ENCODE measurements at regions of chr1 and their contacts with region 1.

Region 1: DNA sequence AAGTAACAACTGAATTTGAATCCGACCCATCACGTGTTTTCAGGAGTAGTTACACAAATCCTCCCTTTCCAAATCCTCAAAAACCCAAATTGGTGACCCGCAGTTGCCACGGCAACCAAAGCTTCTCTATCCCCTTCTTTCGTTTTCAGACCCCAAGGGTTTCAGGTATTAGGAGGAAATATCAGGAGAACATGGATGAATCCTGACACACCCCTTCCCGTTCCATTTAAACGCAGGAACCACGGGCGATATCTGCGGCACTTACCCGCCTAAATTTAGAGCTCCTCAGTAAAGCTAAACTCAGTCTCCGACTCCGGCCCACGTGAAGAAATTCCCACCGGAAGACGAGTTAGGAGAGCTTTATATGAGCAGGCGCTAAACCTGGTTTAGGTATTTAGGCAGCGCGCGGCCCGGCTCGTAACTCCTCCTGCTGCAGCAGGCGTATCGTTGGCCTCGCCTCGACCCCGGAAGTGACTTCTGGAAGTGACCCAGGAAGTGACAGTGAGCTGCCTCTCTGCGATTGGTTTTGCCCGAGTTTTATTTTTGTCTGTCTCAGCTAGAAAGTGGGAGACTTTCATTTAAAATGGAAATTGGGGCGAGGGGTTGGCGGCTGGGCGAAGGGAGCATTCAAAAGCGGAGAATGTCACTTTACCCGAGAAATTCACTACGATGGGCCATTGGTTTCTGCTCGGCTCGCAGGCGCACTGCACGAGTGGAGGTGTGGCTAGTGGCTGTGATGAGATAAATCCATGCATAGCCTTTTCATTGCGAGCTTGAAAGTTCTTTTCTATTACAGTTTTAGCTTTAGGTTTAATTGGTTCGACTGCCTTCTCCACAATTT is at the start of gene TAF1A:
- DNase-seq: peak; percentile 92
- H3K4me3 Mint-ChIP-seq: peak within 1 kb of the TSS; percentile 97
- H3K27ac Mint-ChIP-seq: peak within 1 kb of the TSS; percentile 96
- H3K4me1 Mint-ChIP-seq: peaks cover 45% of the 10 kb centered on the region
- H3K27me3 Mint-ChIP-seq: no peaks in the 10 kb centered on the region
- total RNA-seq, gene TAF1A: 19.1 to 19.6 TPM

Region 2: DNA sequence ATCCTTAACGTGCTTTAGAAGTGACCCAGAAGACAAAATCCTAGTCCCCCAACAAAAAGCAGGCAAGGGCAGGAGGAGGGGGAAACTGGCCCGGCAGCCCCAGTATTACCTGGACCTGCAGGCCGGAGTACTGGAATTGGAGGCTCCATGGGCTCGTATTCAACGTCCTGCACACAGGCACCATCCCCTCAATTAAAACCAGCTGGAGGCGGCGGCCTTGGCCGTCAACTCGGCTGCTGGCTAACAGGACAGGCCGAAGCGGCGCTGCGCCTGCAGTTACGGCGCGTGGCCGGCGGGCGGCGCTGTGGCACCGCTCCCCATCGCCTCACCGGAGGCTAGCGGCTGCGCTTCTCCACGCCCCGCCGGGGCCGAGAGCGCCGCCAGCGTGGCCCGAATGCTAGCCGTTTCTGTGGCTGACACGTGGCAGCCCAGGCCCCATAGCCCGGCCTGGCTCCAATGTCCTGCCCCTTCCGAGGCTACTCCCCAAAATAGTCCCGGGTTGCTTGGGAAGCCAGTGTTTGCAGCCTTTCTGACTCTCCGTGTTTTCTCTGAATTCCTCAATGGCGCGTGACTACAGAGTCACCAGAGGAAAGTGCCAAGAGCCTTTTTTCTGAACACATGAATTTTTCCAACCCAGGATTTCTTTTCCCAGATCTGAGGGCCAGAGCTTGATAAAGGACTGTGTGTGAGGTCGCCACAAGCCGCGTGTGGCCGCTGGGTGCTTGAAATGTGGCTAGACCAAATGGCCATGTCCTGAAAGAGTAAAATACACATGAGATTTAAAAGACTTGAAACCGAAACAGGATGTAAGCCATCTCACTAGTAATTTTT is 124.3 kb before region 1 on chr1:
- CTCF ChIA-PET with region 1: interaction called, 5 read pairs
- POLR2A ChIA-PET with region 1: no interaction called
- intact Hi-C with region 1: loop called (anchors 2 kb)
- DNase-seq: peak; percentile 87
- H3K4me3 Mint-ChIP-seq: peak overlapping the region; percentile 79
- H3K27ac Mint-ChIP-seq: peak overlapping the region; percentile 72
- H3K4me1 Mint-ChIP-seq: peaks cover 10% of the 10 kb centered on the region
- H3K27me3 Mint-ChIP-seq: no peaks in the 10 kb centered on the region

Region 3: DNA sequence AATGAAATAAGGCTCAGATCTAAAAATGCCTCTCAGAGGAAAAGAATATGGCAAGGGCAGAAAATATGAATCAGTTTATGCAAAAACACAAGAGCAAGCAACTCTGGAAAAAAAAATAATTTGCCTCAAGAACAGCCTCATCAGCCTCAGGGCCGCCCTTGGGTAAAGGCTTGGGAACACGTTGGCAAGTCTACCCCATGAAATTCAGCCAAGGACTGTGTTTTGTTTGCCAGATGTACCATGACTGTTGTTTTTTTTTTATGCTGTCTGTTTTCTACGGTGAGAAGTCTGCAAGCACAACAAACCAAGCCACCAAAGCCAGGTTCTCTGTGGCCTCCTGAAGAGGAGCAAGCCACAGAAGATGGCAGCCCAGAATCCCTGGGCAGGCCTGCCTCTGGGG is 59.8 kb before region 1 on chr1:
- CTCF ChIA-PET with region 1: no interaction called
- POLR2A ChIA-PET with region 1: no interaction called
- intact Hi-C with region 1: no loop called
- DNase-seq: no peak
- H3K4me3 Mint-ChIP-seq: no peak overlapping the region
- H3K27ac Mint-ChIP-seq: no peak overlapping the region
- H3K4me1 Mint-ChIP-seq: no peaks in the 10 kb centered on the region
- H3K27me3 Mint-ChIP-seq: peaks cover 4% of the 10 kb centered on the region

Region 4: GRCh38 chr1:222606757-222607156 is 17.1 kb after region 1 on chr1:
- CTCF ChIA-PET with region 1: no interaction called
- POLR2A ChIA-PET with region 1: no interaction called
- intact Hi-C with region 1: no loop called
- DNase-seq: no peak
- H3K4me3 Mint-ChIP-seq: no peak overlapping the region
- H3K27ac Mint-ChIP-seq: no peak overlapping the region
- H3K4me1 Mint-ChIP-seq: no peaks in the 10 kb centered on the region
- H3K27me3 Mint-ChIP-seq: peaks cover 4% of the 10 kb centered on the region

Region 5: DNA sequence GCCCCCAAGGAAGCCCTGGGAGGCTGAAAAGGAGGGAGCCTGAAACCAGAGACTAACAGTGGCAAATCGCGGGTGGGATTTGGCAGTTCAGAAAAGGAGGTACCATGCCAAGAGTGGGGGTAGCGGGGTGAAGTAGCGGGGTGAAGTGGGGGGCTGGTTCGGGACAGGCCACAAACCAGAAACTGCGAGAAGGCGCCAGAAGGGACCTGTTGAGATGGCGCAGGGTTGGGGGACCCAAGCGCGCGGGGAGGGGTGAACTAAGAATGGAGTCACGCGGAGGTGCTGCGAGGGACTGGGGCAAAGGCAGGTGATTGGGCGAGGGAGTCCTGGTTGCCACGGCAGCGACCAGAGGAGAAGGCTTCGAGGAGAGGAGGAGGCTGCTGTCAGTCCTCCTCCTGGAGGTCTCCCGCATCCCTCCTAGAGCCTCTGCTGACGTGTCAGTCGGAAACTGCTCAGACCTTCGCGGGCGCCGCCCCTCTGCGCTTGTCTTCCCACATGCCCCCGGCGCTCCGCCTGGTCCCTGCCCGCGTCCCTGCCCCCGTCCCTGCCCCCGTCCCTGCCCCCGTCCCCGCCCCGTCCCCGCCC is 27.8 kb after region 1 on chr1:
- CTCF ChIA-PET with region 1: interaction called, 5 read pairs
- POLR2A ChIA-PET with region 1: interaction called, 4 read pairs
- intact Hi-C with region 1: loop called (anchors 1 kb)
- DNase-seq: peak; percentile 93
- H3K4me3 Mint-ChIP-seq: peak overlapping the region; percentile 79
- H3K27ac Mint-ChIP-seq: peak overlapping the region; percentile 63
- H3K4me1 Mint-ChIP-seq: peaks cover 24% of the 10 kb centered on the region
- H3K27me3 Mint-ChIP-seq: peaks cover 15% of the 10 kb centered on the region

Region 6: GRCh38 chr1:222634180-222635013 is 44.7 kb after region 1 on chr1:
- CTCF ChIA-PET with region 1: interaction called, 27 read pairs
- POLR2A ChIA-PET with region 1: interaction called, 5 read pairs
- intact Hi-C with region 1: no loop called
- DNase-seq: peak; percentile 33
- H3K4me3 Mint-ChIP-seq: no peak overlapping the region
- H3K27ac Mint-ChIP-seq: no peak overlapping the region
- H3K4me1 Mint-ChIP-seq: peaks cover 2% of the 10 kb centered on the region
- H3K27me3 Mint-ChIP-seq: no peaks in the 10 kb centered on the region

Region 7: DNA sequence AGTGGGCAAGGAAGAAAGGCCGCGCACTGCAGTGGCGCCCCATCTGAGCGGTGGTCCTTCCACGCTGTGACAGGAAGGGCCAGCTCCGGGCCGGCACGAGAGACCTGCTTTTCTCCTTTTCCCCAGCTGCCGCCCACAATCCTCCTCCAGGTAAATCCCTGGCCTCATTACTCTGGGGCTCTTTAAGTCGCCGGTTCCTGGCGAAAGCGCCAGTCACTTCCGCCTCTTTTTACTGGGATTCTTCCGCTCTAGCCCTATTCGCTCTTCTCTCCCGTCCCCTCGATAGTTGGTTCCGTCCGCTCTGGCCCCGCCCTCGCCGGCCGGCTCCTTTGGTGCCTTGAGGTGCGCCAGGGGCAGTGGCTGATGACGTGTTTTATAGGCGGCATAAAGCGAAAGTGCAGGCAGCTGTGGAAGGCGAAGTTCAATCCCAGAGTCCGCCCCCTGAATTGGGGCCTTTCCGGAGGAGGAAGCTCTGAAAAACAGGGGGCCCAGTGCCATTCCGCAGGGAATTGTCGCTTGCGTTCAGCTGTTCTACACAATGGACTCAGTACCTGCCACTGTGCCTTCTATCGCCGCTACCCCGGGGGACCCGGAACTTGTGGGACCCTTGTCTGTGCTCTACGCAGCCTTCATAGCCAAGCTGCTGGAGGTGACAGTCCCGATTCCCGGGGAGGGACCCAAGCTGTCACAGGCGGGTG is 54.4 kb after region 1 on chr1:
- CTCF ChIA-PET with region 1: interaction called, 3 read pairs
- POLR2A ChIA-PET with region 1: interaction called, 3 read pairs
- intact Hi-C with region 1: loop called (anchors 1 kb)
- DNase-seq: peak; percentile 99
- H3K4me3 Mint-ChIP-seq: peak overlapping the region; percentile 99
- H3K27ac Mint-ChIP-seq: peak overlapping the region; percentile 94
- H3K4me1 Mint-ChIP-seq: peaks cover 22% of the 10 kb centered on the region
- H3K27me3 Mint-ChIP-seq: no peaks in the 10 kb centered on the region

Region 8: GRCh38 chr1:222909586-222909985 is 319.9 kb after region 1 on chr1:
- CTCF ChIA-PET with region 1: no interaction called
- POLR2A ChIA-PET with region 1: no interaction called
- intact Hi-C with region 1: no loop called
- DNase-seq: no peak
- H3K4me3 Mint-ChIP-seq: no peak overlapping the region
- H3K27ac Mint-ChIP-seq: no peak overlapping the region
- H3K4me1 Mint-ChIP-seq: no peaks in the 10 kb centered on the region
- H3K27me3 Mint-ChIP-seq: no peaks in the 10 kb centered on the region

Measured in activated CD4-positive, alpha-beta memory T cell treated with anti-CD3 and anti-CD28 coated beads for 36 hours (primary cell).